OCI-LY7 (cell line): ENCODE measurements at regions of chr10 and their contacts with region 1.

Region 1: GRCh38 chr10:22615819-22616499 is 98.4 kb downstream of the PIP4K2A start:
- DNase-seq: peak; percentile 80
- H3K4me3 ChIP-seq: peak overlapping the region; percentile 65
- H3K27ac ChIP-seq: peak overlapping the region; percentile 60
- H3K4me1 ChIP-seq: peaks cover 62% of the 10 kb centered on the region
- CTCF ChIP-seq: no peak

Region 2: GRCh38 chr10:22630234-22631174 is 14.5 kb after region 1 on chr10:
- CTCF ChIA-PET with region 1: interaction called, 3 read pairs
- POLR2A ChIA-PET with region 1: interaction called, 31 read pairs
- intact Hi-C with region 1: no loop called
- DNase-seq: peak; percentile 41
- H3K4me3 ChIP-seq: peak overlapping the region; percentile 45
- H3K27ac ChIP-seq: peak overlapping the region; percentile 30
- H3K4me1 ChIP-seq: peaks cover 24% of the 10 kb centered on the region
- CTCF ChIP-seq: no peak

Region 3: GRCh38 chr10:22682237-22683139 is 66.5 kb after region 1 on chr10:
- CTCF ChIA-PET with region 1: no interaction called
- POLR2A ChIA-PET with region 1: no interaction called
- intact Hi-C with region 1: loop called (anchors 5 kb)
- DNase-seq: peak; percentile 6
- H3K4me3 ChIP-seq: no peak overlapping the region
- H3K27ac ChIP-seq: no peak overlapping the region
- H3K4me1 ChIP-seq: peaks cover 21% of the 10 kb centered on the region
- CTCF ChIP-seq: no peak

Region 4: GRCh38 chr10:22714479-22715289 is 98.7 kb after region 1 on chr10 and contains the start of gene PIP4K2A:
- CTCF ChIA-PET with region 1: no interaction called
- POLR2A ChIA-PET with region 1: interaction called, 3 read pairs
- intact Hi-C with region 1: loop called (anchors 5 kb)
- DNase-seq: peak; percentile 84
- H3K4me3 ChIP-seq: peak within 1 kb of the TSS; percentile 88
- H3K27ac ChIP-seq: peak within 1 kb of the TSS; percentile 41
- H3K4me1 ChIP-seq: peaks cover 28% of the 10 kb centered on the region
- CTCF ChIP-seq: no peak
- total RNA-seq, gene PIP4K2A: 32.5 and 37.9 TPM in 2 replicates